Activated T-helper 2 cell treated with anti-CD3 and anti-CD28 coated beads, Interferon-gamma antibody, Interleukin-2, Interleukin-4, amounts not matched to agents 10 μg/mL and 5 μg/mL and 100 μg/mL, durations not matched to agents 14 hours and 24 hours and 36 hours (primary cell): ENCODE measurements at regions of chr19 and their contacts with region 1.

Region 1: GRCh38 chr19:57389730-57390598 is at the start of gene ZNF548:
- DNase-seq: peak; percentile 94
- H3K4me3 Mint-ChIP-seq: peak within 1 kb of the TSS; percentile 86
- H3K27ac Mint-ChIP-seq: peak within 1 kb of the TSS; percentile 78
- H3K4me1 Mint-ChIP-seq: peaks cover 18% of the 10 kb centered on the region
- H3K27me3 Mint-ChIP-seq: no peaks in the 10 kb centered on the region
- total RNA-seq, gene ZNF548: 10.5 and 12.5 TPM in 2 replicates

Region 2: DNA sequence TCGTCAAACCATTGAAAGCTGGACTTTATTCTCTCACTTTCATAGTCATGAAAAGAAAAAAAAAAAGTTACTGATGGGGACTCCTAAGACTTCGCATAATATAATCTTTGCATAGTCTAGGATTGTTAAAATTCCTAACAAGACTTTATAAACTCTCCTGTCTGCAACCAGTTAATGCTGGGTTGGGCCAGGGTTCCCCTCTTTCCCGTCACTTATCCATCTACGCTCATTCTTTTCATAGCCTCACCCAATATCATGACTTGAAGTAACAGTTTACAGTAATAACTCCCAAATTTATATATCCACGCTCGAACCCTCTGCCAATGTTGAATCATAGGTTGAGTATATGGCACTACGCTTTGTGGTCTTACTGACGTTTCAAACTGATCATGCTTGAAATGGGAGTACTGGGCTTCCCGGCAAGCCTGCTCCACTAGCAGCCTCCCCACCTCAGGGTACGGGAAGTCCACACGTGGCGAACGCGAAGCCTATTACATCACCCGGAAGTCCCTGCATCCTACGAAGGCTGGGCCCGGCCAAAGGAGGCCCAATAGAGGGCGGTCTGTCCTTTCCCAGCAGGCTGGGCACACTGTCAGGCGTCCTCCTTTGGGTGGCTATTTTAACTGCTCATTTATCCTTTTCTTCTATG is 110.4 kb before region 1 on chr19:
- intact Hi-C with region 1: loop called (anchors 1 kb)
- DNase-seq: peak; percentile 73
- H3K4me3 Mint-ChIP-seq: peak overlapping the region; percentile 15
- H3K27ac Mint-ChIP-seq: no peak overlapping the region
- H3K4me1 Mint-ChIP-seq: peaks cover 21% of the 10 kb centered on the region
- H3K27me3 Mint-ChIP-seq: no peaks in the 10 kb centered on the region

Region 3: GRCh38 chr19:57350877-57351805 is 38.8 kb before region 1 on chr19 and contains the start of gene ZNF304:
- intact Hi-C with region 1: loop called (anchors 1 kb)
- DNase-seq: peak; percentile 83
- H3K4me3 Mint-ChIP-seq: peak within 1 kb of the TSS; percentile 92
- H3K27ac Mint-ChIP-seq: peak within 1 kb of the TSS; percentile 86
- H3K4me1 Mint-ChIP-seq: peaks cover 25% of the 10 kb centered on the region
- H3K27me3 Mint-ChIP-seq: no peaks in the 10 kb centered on the region
- total RNA-seq, gene ZNF304: 5.2 and 6.5 TPM in 2 replicates

Region 4: DNA sequence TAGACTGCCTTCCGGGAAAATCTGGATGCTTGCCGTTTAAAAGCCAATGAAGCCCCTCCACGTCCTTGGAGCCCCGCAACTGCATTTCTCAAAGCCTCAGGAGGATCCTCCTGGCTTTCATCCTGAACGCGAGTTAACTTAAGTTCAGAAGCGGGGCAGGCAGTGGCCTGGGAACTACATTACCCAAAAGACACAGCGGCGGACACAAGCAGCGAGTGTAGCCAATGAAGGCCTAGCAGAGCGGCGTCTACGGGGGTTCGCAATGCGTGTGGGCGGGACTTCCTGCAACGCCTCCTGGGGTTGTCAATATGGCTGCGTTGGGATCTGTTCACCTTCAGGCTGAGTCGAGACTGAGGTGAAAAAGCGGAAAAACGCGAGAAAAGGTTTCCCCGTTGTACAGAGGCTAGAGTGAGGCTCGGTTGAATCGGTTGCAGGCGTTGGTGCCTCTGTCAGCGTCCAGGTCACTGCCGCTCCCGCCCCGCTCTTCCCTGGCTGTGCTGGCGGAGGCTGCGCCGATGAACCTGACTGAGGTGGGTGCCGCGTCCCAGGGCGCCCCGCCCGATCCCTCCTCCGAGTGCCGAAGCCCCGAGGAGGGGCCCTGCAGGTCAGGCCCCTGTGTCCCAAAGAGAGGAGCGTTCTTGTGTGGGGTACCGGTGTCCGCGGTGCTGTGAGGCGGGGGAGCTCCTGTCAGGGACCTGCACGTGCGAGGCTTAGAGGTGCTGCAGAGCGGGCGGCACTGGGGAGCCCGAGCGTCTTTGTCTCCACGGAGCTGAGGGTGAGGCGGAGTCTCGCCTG is 21.1 kb after region 1 on chr19 and contains the start of gene ZNF17:
- intact Hi-C with region 1: loop called (anchors 1 kb)
- DNase-seq: peak; percentile 88
- H3K4me3 Mint-ChIP-seq: peak within 1 kb of the TSS; percentile 92
- H3K27ac Mint-ChIP-seq: peak within 1 kb of the TSS; percentile 63
- H3K4me1 Mint-ChIP-seq: peaks cover 11% of the 10 kb centered on the region
- H3K27me3 Mint-ChIP-seq: no peaks in the 10 kb centered on the region
- total RNA-seq, gene ZNF17: 7.7 and 9.3 TPM in 2 replicates

Region 5: GRCh38 chr19:57527136-57527881 is 137.3 kb after region 1 on chr19 and contains the start of gene ZNF549:
- intact Hi-C with region 1: loop called (anchors 1 kb)
- DNase-seq: peak; percentile 84
- H3K4me3 Mint-ChIP-seq: peak within 1 kb of the TSS; percentile 97
- H3K27ac Mint-ChIP-seq: peak within 1 kb of the TSS; percentile 78
- H3K4me1 Mint-ChIP-seq: peaks cover 15% of the 10 kb centered on the region
- H3K27me3 Mint-ChIP-seq: no peaks in the 10 kb centered on the region
- total RNA-seq, gene ZNF549: 3.5 and 4.1 TPM in 2 replicates